HEK293T (cell line): ENCODE measurements at regions of chr11 and their contacts with region 1.

Region 1: GRCh38 chr11:113896156-113896879 is 8.3 kb upstream of the HTR3B start:
- DNase-seq: peak; percentile 60

Region 2: GRCh38 chr11:113764527-113765219 is 131.6 kb before region 1 on chr11:
- CTCF ChIA-PET with region 1: no interaction called
- POLR2A ChIA-PET with region 1: no interaction called
- DNase-seq: no peak

Region 3: DNA sequence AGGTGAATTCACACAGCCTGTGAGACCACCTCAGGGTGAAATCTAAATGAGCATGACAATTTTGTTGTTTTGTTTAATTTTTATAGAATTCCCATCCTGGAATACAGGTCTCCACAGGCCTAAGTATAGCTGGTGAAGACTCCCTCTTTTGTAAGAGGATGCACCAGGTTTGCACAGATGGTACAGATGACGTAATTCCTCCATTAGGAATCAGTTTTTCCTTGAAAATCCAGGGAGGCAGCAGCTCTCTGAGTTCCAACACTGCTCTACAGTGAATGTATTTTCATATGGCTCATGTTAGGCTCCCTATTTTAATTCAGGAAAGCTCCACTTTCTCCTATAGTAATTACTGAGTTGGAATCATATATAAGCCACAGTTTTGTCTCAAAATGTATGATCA is 68.1 kb before region 1 on chr11:
- CTCF ChIA-PET with region 1: no interaction called
- POLR2A ChIA-PET with region 1: no interaction called
- DNase-seq: no peak

Region 4: DNA sequence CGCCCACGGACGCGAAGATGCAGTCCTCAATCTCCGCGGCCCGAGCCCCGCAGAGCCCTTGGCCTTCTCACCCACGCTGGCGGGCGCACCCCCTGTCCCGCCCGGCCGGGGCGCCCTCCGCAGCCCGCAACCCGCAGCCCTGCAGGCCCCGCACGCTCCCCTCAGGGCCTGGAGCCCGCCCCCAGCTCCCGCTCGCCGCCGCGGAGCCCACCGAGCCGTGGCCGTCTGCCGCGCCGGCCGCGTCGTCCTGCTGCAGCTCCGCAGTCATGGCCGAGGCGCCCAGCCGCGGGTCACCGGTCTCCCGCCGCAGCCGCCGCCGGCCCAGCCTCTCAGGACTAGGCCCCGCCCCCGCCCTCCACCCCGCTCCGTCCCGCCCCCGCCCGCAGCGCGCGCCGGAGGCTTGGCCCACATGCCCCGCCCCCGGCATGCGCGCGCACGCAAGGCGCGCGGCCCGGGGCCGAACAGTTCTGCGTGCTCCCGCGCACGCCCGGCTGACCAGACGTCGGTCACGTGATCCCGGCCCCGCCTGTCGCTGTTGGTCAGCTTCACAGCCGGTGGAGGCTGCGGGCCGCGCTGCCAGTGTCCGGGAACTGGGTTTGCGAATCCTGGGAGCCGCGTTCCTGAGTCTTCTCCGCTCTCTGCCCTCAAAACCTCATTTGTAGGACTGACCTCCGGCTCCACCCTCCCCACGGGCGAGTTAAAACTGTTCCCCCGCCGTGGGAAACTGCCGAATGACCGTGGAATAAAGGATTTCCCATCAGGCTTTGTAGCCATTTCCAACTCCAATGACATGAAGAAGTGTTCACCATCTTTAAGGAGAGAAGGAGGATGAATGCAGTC is 20.9 kb before region 1 on chr11 and contains the start of gene USP28:
- CTCF ChIA-PET with region 1: interaction called, 16 read pairs
- POLR2A ChIA-PET with region 1: interaction called, 11 read pairs
- DNase-seq: peak; percentile 98

Region 5: GRCh38 chr11:113884361-113884836 is 11.9 kb before region 1 on chr11:
- CTCF ChIA-PET with region 1: interaction called, 20 read pairs
- POLR2A ChIA-PET with region 1: interaction called, 3 read pairs
- DNase-seq: no peak

Region 6: GRCh38 chr11:113974741-113975470 is 78.6 kb after region 1 on chr11 and contains the start of gene HTR3A:
- CTCF ChIA-PET with region 1: interaction called, 13 read pairs
- POLR2A ChIA-PET with region 1: interaction called, 3 read pairs
- DNase-seq: peak; percentile 78

Region 7: GRCh38 chr11:113994077-113994954 is 98.0 kb after region 1 on chr11:
- CTCF ChIA-PET with region 1: interaction called, 12 read pairs
- POLR2A ChIA-PET with region 1: interaction called, 3 read pairs
- DNase-seq: peak; percentile 67